ENCODE measurements at regions of chr13 and their contacts with region 1.

Region 1: GRCh38 chr13:20566898-20567874 is at the start of gene IFT88:
- DNase-seq: peak; percentile 78 to 94 (median 86)
- H3K4me3 ChIP-seq: peak within 1 kb of the TSS; percentile 57 to 94 (median 82)
- H3K27ac ChIP-seq: peak within 1 kb of the TSS; percentile 90 to 99 (median 96)
- H3K27me3 ChIP-seq: no peaks in the 10 kb centered on the region
- CTCF ChIP-seq: peak in 21 of 56 donors; percentile 4 to 38 (median 12)
- total RNA-seq, gene IFT88: 12.3 to 33.2 (median 21.1) TPM

Region 2: DNA sequence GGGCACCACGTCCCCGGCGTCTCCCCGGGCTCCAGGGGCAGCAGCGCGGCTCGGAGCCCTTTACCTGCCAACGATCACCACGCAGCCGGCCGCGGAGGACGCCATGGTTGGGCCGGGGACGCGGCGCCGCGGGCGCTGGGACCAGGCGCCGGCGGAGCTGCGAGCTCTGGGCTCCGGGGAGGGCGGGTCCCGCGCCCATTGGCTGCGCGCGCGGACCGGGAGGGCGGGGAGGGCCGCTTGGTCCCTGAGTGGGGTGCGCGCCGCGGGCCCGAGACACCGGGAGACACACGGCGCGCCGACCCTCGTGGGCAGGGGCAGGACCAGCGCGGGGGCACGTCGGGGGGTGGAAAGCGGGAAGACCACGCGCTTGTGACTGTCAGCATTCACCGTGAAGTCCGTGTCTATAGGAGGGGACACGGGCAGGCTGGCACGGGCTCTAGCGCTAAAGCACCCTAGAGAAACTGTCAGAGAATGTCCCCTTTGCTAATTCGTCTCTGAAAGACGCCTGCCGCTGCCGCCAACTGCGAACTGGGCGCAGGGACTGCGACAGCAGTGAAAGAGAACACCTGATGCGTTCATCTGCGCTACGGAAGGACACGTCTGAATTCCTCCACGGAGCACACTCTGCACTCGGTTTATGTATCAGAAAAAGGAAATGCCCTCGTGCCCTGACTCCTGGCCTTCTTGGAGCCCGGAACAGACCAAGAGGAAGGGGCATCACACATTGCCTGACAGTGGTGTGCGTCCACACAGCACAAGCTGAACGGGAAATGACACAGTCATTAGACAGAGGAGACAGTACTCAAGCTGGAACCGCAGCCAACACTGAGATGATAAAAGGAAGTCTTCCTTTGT is 41.3 kb before region 1 on chr13 and contains the start of gene CRYL1:
- intact Hi-C with region 1: loop called (anchors 2 to 5 kb)
- DNase-seq: peak; percentile 75 to 94 (median 83)
- H3K4me3 ChIP-seq: peak within 1 kb of the TSS; percentile 49 to 99 (median 90)
- H3K27ac ChIP-seq: peak within 1 kb of the TSS; percentile 77 to 99 (median 96)
- H3K27me3 ChIP-seq: no peaks in the 10 kb centered on the region
- CTCF ChIP-seq: peak in 8 of 56 donors; percentile 4 to 36 (median 11)
- total RNA-seq, gene CRYL1: 41.1 to 127 (median 74.6) TPM

Region 3: DNA sequence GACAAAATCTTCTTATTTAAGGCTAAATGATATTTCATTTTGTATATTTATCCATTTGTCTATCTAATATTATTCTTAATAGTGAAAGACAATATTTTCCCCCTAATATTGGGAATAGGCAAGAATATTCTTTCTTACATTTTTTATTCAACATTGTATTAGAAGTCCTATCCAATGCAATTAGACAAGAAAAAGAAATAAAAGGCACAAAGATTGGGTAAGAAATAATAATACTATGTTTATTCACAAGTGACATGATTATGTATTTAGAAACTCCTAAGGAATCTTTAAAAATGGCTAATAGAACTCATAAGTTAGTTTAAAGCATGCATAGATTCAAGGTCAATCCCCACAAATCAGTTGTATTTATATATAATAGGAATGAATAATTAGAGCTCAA is 30.2 kb before region 1 on chr13:
- intact Hi-C with region 1: no loop called
- DNase-seq: no peak
- H3K4me3 ChIP-seq: no peak overlapping the region
- H3K27ac ChIP-seq: no peak overlapping the region
- H3K27me3 ChIP-seq: no peaks in the 10 kb centered on the region
- CTCF ChIP-seq: no peak

Region 4: DNA sequence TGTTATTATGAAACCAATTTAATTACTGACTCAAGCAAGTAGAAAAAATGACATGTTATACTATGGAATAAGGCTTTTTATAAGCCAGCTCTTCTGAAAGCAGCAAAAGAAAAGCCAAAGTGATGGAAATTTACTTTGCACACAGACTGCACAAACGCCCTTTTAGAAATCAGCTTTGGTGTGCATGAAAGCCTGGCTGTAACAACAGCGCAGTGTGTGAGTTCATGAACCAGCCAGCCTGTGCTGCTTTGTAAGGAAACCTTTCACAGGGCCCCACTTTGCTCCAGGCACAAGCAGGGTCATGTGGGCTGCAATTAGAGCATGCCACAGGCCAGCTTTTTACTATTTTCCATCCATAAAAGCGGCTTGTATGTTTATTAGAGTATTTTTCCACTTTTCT is 13.9 kb before region 1 on chr13:
- intact Hi-C with region 1: loop called in 1 of 2 experiments (anchors 2 kb)
- DNase-seq: peak; percentile 15 to 93 (median 83)
- H3K4me3 ChIP-seq: peak overlapping the region in 27 of 59 donors; percentile 1 to 51 (median 23)
- H3K27ac ChIP-seq: peak overlapping the region; percentile 52 to 100 (median 97)
- H3K27me3 ChIP-seq: no peaks in the 10 kb centered on the region
- CTCF ChIP-seq: peak in 11 of 56 donors; percentile 4 to 29 (median 15)

Region 5: GRCh38 chr13:20703780-20704445 is 136.7 kb after region 1 on chr13:
- intact Hi-C with region 1: loop called (anchors 2 to 5 kb)
- DNase-seq: peak in 9 of 10 donors; percentile 46 to 84 (median 59)
- H3K4me3 ChIP-seq: peak overlapping the region in 57 of 59 donors; percentile 21 to 90 (median 52)
- H3K27ac ChIP-seq: peak overlapping the region in 37 of 59 donors; percentile 13 to 86 (median 71)
- H3K27me3 ChIP-seq: no peaks in the 10 kb centered on the region
- CTCF ChIP-seq: peak in 45 of 56 donors; percentile 15 to 60 (median 40)

Region 6: GRCh38 chr13:20773194-20774080 is 206.3 kb after region 1 on chr13 and contains the start of gene EEF1AKMT1:
- intact Hi-C with region 1: loop called (anchors 5 kb)
- DNase-seq: peak; percentile 80 to 93 (median 88)
- H3K4me3 ChIP-seq: peak within 1 kb of the TSS; percentile 45 to 92 (median 79)
- H3K27ac ChIP-seq: peak within 1 kb of the TSS; percentile 35 to 95 (median 88)
- H3K27me3 ChIP-seq: no peaks in the 10 kb centered on the region
- CTCF ChIP-seq: peak in 26 of 56 donors; percentile 2 to 49 (median 28)
- total RNA-seq, gene EEF1AKMT1: 6.6 to 19.0 (median 12.2) TPM

Region 7: DNA sequence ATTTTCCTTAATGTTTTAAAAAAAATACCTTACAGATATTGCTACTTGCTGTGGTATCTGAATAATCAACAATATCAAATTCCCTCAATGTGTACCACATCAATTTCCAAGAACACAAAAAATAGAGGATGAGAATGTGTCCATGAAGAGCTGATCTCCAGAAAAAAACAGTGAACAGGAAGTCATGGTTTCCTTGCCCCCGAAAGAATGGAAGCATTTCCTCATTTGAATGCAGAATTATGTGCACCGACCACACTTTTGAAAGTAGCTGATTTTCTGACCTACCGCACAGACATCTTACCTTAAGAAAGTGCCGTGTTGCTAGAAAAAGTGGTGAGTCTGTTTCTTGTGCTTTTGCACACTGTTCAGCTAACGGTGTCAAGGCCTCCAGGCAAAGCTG is 220.0 kb after region 1 on chr13:
- intact Hi-C with region 1: no loop called
- DNase-seq: no peak
- H3K4me3 ChIP-seq: no peak overlapping the region
- H3K27ac ChIP-seq: peak overlapping the region in 1 of 59 donors; percentile 23
- H3K27me3 ChIP-seq: no peaks in the 10 kb centered on the region
- CTCF ChIP-seq: no peak

Region 8: GRCh38 chr13:20882206-20882605 is 315.0 kb after region 1 on chr13:
- intact Hi-C with region 1: no loop called
- DNase-seq: no peak
- H3K4me3 ChIP-seq: no peak overlapping the region
- H3K27ac ChIP-seq: no peak overlapping the region
- H3K27me3 ChIP-seq: no peaks in the 10 kb centered on the region
- CTCF ChIP-seq: no peak